Caco-2 (cell line): ENCODE measurements at regions of chr11 and their contacts with region 1.

Region 1: DNA sequence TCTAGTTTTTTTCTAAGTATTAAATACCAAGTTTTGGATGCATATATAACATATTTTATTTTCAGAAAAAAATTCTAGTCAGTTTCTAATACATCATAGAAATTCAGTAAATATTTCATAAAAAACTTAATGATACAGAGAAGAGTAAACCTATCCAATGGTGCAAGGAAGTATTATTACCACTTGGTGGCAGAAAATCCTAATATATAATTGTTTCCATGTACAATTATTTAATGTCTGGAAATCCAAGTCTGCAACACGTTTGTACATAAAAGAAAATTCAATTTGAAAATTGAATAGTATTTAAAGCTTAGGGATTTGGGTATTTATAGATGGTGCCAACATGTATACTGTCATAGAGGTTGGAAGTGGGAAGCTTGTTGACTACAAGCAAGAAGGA is 127.0 kb downstream of the TRPC6 start:
- DNase-seq: no peak
- H3K4me3 ChIP-seq: no peak overlapping the region
- H3K4me3 Mint-ChIP-seq: no peak overlapping the region
- H3K27ac Mint-ChIP-seq: no peak overlapping the region
- H3K4me1 ChIP-seq: no peaks in the 10 kb centered on the region
- H3K4me1 Mint-ChIP-seq: no peaks in the 10 kb centered on the region
- H3K27me3 ChIP-seq: no peaks in the 10 kb centered on the region
- H3K27me3 Mint-ChIP-seq: no peaks in the 10 kb centered on the region
- CTCF ChIP-seq: peak; percentile 43 to 72

Region 2: DNA sequence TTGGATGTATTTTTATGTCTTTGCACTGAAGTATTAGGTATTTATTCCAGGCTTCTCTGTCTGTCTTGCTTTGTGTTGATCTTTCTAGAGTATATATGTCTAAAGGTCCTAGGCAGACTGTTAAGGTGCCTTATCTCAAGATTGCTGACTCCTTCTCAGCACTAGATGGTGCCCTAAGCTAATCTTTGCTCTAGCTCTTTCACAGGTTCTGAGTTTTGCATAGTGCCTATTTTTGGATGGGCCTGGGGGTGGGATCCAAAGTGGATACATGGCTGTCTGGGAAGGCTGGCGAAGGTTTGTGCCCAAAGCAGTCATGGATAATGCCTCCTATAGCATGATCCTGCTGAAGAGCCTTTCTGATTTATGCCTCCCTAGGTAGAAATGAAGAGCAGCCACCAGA is 27.9 kb before region 1 on chr11:
- CTCF ChIA-PET with region 1: no interaction called
- POLR2A ChIA-PET with region 1: no interaction called
- intact Hi-C with region 1: no loop called
- DNase-seq: peak in 1 of 2 experiments; percentile 65
- H3K4me3 ChIP-seq: no peak overlapping the region
- H3K4me3 Mint-ChIP-seq: peak overlapping the region; percentile 10
- H3K27ac Mint-ChIP-seq: no peak overlapping the region
- H3K4me1 ChIP-seq: peaks cover 22% of the 10 kb centered on the region
- H3K4me1 Mint-ChIP-seq: peaks cover 23% of the 10 kb centered on the region
- H3K27me3 ChIP-seq: no peaks in the 10 kb centered on the region
- H3K27me3 Mint-ChIP-seq: no peaks in the 10 kb centered on the region
- CTCF ChIP-seq: peak; percentile 74 to 79

Region 3: GRCh38 chr11:101620026-101620425 is 163.2 kb after region 1 on chr11:
- CTCF ChIA-PET with region 1: interaction called, 17 read pairs
- POLR2A ChIA-PET with region 1: no interaction called
- intact Hi-C with region 1: loop called (anchors 1 kb)
- DNase-seq: no peak
- H3K4me3 ChIP-seq: no peak overlapping the region
- H3K4me3 Mint-ChIP-seq: no peak overlapping the region
- H3K27ac Mint-ChIP-seq: no peak overlapping the region
- H3K4me1 ChIP-seq: no peaks in the 10 kb centered on the region
- H3K4me1 Mint-ChIP-seq: no peaks in the 10 kb centered on the region
- H3K27me3 ChIP-seq: no peaks in the 10 kb centered on the region; the same call in 1 of the 2 replicates
- H3K27me3 Mint-ChIP-seq: peaks cover under 1% of the 10 kb centered on the region
- CTCF ChIP-seq: peak; percentile 28 to 39

Region 4: GRCh38 chr11:101759771-101760450 is 303.1 kb after region 1 on chr11:
- CTCF ChIA-PET with region 1: no interaction called
- POLR2A ChIA-PET with region 1: no interaction called
- intact Hi-C with region 1: loop called (anchors 1 kb)
- DNase-seq: peak in 1 of 2 experiments; percentile 64
- H3K4me3 ChIP-seq: no peak overlapping the region
- H3K4me3 Mint-ChIP-seq: no peak overlapping the region
- H3K27ac Mint-ChIP-seq: no peak overlapping the region
- H3K4me1 ChIP-seq: no peaks in the 10 kb centered on the region
- H3K4me1 Mint-ChIP-seq: no peaks in the 10 kb centered on the region
- H3K27me3 ChIP-seq: no peaks in the 10 kb centered on the region
- H3K27me3 Mint-ChIP-seq: no peaks in the 10 kb centered on the region
- CTCF ChIP-seq: peak; percentile 51 to 76

Region 5: GRCh38 chr11:101807531-101807930 is 350.7 kb after region 1 on chr11:
- CTCF ChIA-PET with region 1: no interaction called
- POLR2A ChIA-PET with region 1: no interaction called
- intact Hi-C with region 1: no loop called
- DNase-seq: no peak
- H3K4me3 ChIP-seq: no peak overlapping the region
- H3K4me3 Mint-ChIP-seq: no peak overlapping the region
- H3K27ac Mint-ChIP-seq: no peak overlapping the region
- H3K4me1 ChIP-seq: no peaks in the 10 kb centered on the region
- H3K4me1 Mint-ChIP-seq: no peaks in the 10 kb centered on the region
- H3K27me3 ChIP-seq: no peaks in the 10 kb centered on the region
- H3K27me3 Mint-ChIP-seq: peaks cover 4% of the 10 kb centered on the region
- CTCF ChIP-seq: no peak

Region 6: DNA sequence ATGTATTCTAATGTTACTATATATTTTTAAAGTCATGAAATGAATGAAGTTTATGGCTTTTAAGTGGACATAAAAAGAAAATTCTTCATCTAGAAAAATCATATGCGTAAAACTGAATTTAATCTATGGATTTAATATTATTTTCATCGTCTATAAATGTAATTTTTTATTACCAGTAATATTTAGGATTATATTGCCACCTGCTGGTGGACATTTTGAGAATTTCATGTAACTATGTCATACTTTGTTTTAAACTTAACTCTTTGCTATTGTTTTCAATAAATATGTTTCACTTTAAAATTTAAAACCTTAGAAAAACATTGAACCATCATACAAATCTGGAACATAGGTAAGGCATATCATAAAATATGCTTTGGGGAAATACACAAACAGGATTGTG is 391.4 kb after region 1 on chr11:
- CTCF ChIA-PET with region 1: interaction called, 4 read pairs
- POLR2A ChIA-PET with region 1: no interaction called
- intact Hi-C with region 1: loop called (anchors 1 kb)
- DNase-seq: peak in 1 of 2 experiments; percentile 41
- H3K4me3 ChIP-seq: no peak overlapping the region
- H3K4me3 Mint-ChIP-seq: no peak overlapping the region
- H3K27ac Mint-ChIP-seq: no peak overlapping the region
- H3K4me1 ChIP-seq: no peaks in the 10 kb centered on the region
- H3K4me1 Mint-ChIP-seq: no peaks in the 10 kb centered on the region
- H3K27me3 ChIP-seq: no peaks in the 10 kb centered on the region
- H3K27me3 Mint-ChIP-seq: no peaks in the 10 kb centered on the region
- CTCF ChIP-seq: peak; percentile 24 to 62

Region 7: DNA sequence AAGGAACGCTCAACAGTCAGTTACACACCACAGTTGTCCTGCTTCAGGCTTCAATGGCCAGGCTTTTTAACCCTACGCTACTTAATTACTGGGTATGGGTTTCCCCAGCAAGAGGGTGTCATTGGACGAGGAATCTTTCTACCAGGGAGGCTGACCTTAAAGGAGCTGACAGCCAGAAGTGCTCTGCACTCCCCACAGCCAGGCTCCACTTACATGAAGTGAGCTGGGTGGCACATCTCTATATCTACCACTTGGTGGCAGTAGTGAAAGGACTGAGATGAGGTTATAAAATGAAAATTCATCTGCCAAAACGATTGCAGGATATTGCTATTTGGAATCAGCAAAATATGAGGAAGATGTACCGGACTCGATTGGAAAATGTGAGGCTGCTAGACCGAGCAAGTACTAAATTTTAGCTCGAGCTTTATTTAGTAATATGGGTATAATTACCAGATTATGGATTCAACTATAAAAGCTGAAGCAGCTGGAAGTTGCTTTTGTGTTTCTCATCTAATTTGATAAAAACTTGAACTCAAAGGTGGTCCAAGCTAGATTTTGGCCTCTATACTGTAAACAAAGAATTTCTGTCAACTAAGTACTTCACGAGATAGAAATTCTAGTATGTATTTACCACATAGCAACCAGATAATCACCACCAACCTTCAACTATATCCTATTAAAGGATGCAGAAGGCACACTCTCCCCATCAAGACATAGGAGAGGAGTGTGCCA is 404.1 kb after region 1 on chr11:
- CTCF ChIA-PET with region 1: interaction called, 3 read pairs
- POLR2A ChIA-PET with region 1: no interaction called
- intact Hi-C with region 1: loop called (anchors 5 kb)
- DNase-seq: peak; percentile 73 to 79
- H3K4me3 ChIP-seq: no peak overlapping the region
- H3K4me3 Mint-ChIP-seq: no peak overlapping the region
- H3K27ac Mint-ChIP-seq: peak overlapping the region; percentile 71
- H3K4me1 ChIP-seq: peaks cover 28% of the 10 kb centered on the region
- H3K4me1 Mint-ChIP-seq: peaks cover 25% of the 10 kb centered on the region
- H3K27me3 ChIP-seq: no peaks in the 10 kb centered on the region
- H3K27me3 Mint-ChIP-seq: no peaks in the 10 kb centered on the region
- CTCF ChIP-seq: peak; percentile 89 to 95

Region 8: DNA sequence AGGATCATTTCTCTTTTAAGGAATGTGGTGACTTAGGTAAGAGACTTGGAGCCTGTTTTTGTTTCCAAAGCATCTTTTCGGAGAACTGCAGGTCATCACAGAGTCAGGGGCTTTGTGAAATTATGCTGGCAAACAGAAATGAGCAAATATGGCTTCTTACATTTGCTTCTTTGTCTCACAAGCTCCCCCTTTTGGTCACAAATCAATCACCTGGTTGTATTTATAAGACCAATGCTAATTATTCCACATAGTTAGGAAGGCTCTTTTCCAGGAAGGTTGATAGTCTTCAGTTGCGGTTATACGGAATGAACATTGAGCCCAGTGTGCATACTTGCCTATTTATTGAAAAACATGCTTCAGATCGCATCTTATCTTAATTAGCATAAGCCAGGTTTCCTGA is 423.4 kb after region 1 on chr11:
- CTCF ChIA-PET with region 1: no interaction called
- POLR2A ChIA-PET with region 1: no interaction called
- intact Hi-C with region 1: loop called (anchors 1 kb)
- DNase-seq: peak; percentile 42 to 77
- H3K4me3 ChIP-seq: no peak overlapping the region
- H3K4me3 Mint-ChIP-seq: no peak overlapping the region
- H3K27ac Mint-ChIP-seq: no peak overlapping the region
- H3K4me1 ChIP-seq: peaks cover 8% of the 10 kb centered on the region
- H3K4me1 Mint-ChIP-seq: peaks cover 11% of the 10 kb centered on the region
- H3K27me3 ChIP-seq: no peaks in the 10 kb centered on the region
- H3K27me3 Mint-ChIP-seq: no peaks in the 10 kb centered on the region
- CTCF ChIP-seq: peak; percentile 66 to 90

Region 9: DNA sequence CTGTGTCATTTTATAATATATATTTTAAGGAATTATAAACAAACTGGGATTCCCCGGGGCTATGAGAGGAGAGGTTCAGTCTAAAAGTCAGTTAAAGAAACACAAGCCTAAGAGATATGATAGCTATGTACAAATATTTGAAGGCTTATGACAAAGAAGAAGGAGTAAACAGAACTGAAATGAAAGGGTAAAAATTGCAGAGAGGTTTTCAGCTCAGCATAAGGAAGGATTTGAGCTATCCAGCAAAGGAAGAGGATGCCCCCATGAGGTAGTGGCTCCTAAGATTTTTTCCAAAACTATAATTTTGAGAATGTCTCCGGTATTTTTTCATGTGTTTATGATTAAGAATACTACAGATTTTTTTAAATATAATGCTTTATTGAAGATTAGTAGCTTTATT is 517.4 kb after region 1 on chr11:
- CTCF ChIA-PET with region 1: no interaction called
- POLR2A ChIA-PET with region 1: no interaction called
- intact Hi-C with region 1: loop called (anchors 5 kb)
- DNase-seq: peak in 1 of 2 experiments; percentile 65
- H3K4me3 ChIP-seq: no peak overlapping the region
- H3K4me3 Mint-ChIP-seq: peak overlapping the region; percentile 45
- H3K27ac Mint-ChIP-seq: peak overlapping the region; percentile 43
- H3K4me1 ChIP-seq: peaks cover 22% of the 10 kb centered on the region
- H3K4me1 Mint-ChIP-seq: peaks cover 14% of the 10 kb centered on the region
- H3K27me3 ChIP-seq: no peaks in the 10 kb centered on the region
- H3K27me3 Mint-ChIP-seq: no peaks in the 10 kb centered on the region
- CTCF ChIP-seq: peak; percentile 39 to 72